Right ventricle myocardium inferior (tissue), 1 donor: ENCODE measurements at regions of chr7 and their contacts with region 1.

Region 1: GRCh38 chr7:32154797-32155196 is 84.6 kb upstream of the PDE1C start:
- DNase-seq: peak; percentile 73
- ATAC-seq: peak; percentile 82

Region 2: DNA sequence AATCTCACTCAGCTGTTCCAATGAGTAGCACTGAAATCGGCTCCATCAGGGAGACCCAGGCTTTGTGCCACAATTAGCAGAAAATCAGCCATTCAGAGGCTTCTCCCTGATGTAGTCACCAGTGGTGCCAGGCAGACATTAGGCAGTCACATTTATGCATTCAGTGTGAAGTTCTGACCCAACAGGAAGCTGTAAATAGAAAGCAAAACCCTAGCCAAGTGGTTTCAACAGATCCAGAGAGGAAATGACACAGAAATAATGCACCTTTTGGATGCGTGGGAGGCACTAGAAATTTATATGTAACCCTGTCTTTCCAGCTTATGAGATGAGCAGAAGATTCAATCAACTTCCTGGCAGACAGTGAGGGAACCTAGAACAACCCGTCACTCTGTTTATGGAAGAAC is 271.0 kb before region 1 on chr7:
- intact Hi-C with region 1: loop called (anchors 5 kb)
- DNase-seq: no peak
- ATAC-seq: peak; percentile 53

Region 3: GRCh38 chr7:31986944-31987430 is 167.8 kb before region 1 on chr7:
- intact Hi-C with region 1: loop called (anchors 10 kb)
- DNase-seq: no peak
- ATAC-seq: no peak

Region 4: DNA sequence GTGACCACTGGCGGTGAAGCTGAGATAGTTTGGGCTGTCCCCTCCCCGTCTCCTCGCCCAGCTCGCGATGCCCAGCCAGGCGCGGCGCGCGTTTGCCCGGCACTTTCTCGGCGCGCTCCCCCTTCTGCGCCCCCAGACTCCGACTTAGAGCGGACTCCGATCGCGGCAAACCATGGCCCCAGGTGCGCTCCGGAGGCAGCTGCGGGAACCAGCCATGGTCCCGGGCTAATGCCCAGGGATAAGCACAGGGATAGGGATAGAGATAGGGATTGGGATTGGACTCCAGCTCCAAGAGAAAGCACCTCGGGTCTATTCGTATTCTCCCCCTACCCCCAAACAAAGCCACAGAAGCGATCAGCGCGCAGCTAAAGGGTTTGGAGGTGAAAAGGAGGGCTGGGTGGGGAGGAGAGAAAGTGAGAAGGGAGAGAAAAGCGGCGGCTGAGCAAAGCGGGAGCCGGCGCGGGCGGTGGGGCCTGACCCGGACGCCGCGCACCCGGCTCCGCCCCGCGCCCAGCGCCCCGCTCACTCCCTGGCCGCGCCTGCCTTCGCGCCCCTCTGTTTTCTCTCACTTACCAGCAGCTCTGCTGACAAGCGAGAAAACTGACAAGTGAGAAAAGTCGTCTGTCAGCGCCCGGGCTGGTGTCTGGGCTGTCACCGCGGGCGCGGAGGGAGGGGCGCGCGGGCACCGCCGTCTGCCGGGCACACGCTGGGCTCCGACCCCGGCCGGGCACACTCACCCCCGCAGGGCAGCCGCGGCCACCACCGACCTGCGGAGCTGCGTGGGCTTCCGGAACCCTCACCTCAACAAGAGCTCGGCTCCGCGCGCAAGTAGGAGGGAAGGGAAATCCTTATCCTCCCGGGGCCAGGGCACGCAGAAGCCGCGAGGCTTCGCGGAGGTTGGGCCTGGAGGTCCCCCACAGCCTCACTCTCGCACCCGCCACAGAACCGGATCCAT is 84.1 kb before region 1 on chr7 and contains the start of gene PDE1C:
- intact Hi-C with region 1: loop called (anchors 2 kb)
- DNase-seq: peak; percentile 81
- ATAC-seq: peak; percentile 90
- total RNA-seq, gene PDE1C: 198 TPM

Region 5: GRCh38 chr7:32102432-32102873 is 52.3 kb before region 1 on chr7:
- intact Hi-C with region 1: loop called (anchors 1 kb)
- DNase-seq: no peak
- ATAC-seq: peak; percentile 87